ENCODE measurements at regions of chr9 and their contacts with region 1.

Region 1: DNA sequence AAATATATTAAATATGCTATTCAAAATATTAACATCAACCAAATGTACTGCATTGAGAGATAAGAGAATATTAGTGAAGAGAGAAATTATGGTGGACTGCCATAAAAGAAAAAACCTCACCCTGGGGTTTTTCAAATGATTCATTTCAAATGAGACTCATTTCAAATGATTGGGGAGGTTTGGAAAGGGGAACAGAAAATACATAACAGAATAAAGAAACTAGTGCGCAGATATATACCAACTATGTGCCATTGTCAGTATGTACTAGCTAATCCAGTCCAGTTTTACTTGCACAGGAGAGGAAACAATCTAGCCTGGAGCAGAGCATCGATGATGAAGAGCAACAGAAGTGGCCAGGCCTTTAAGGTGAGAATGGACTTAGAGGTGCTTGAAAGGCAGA is 651.6 kb upstream of the RORB start:
- DNase-seq: no peak
- ATAC-seq: no peak
- H3K4me3 ChIP-seq: no peak overlapping the region
- H3K27ac ChIP-seq: no peak overlapping the region
- H3K4me1 ChIP-seq: no peaks in the 10 kb centered on the region
- H3K27me3 ChIP-seq: no peaks in the 10 kb centered on the region
- CTCF ChIP-seq: no peak
- POLR2A ChIP-seq: no peak

Region 2: GRCh38 chr9:73824671-73825070 is 20.9 kb before region 1 on chr9:
- intact Hi-C with region 1: no loop called
- DNase-seq: no peak
- ATAC-seq: no peak
- H3K4me3 ChIP-seq: no peak overlapping the region
- H3K27ac ChIP-seq: no peak overlapping the region
- H3K4me1 ChIP-seq: no peaks in the 10 kb centered on the region
- H3K27me3 ChIP-seq: no peaks in the 10 kb centered on the region
- CTCF ChIP-seq: no peak
- POLR2A ChIP-seq: no peak

Region 3: GRCh38 chr9:73872701-73873100 is 27.2 kb after region 1 on chr9:
- intact Hi-C with region 1: loop called in 1 of 10 experiments (anchors 1 kb)
- DNase-seq: no peak
- ATAC-seq: no peak
- H3K4me3 ChIP-seq: no peak overlapping the region
- H3K27ac ChIP-seq: no peak overlapping the region
- H3K4me1 ChIP-seq: no peaks in the 10 kb centered on the region
- H3K27me3 ChIP-seq: no peaks in the 10 kb centered on the region
- CTCF ChIP-seq: no peak
- POLR2A ChIP-seq: no peak

Region 4: DNA sequence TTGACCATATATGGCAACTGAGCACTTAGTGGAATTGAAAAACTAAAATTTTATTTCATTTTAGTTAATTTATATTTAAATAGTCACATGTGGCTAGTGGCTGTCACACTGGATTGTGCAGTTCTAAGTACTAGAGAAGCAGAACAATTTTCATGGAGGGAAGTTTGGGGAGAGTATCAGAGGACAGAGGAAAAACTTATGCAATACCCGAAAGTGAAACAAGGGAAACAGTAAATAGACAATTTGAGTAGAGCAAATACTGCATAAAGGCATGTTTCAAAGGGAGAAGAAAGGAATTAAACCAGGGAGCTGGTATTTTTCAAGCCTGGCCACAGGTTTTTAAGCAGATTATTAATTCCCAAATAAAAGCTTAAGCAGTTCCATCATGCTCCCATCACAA is 61.1 kb after region 1 on chr9:
- intact Hi-C with region 1: no loop called
- DNase-seq: no peak
- ATAC-seq: no peak
- H3K4me3 ChIP-seq: no peak overlapping the region
- H3K27ac ChIP-seq: no peak overlapping the region
- H3K4me1 ChIP-seq: no peaks in the 10 kb centered on the region
- H3K27me3 ChIP-seq: no peaks in the 10 kb centered on the region
- CTCF ChIP-seq: no peak
- POLR2A ChIP-seq: no peak

Measured in heart left ventricle (tissue), 16 donors.